Activated naive CD4-positive, alpha-beta T cell treated with anti-CD3 and anti-CD28 coated beads, Interleukin-2, amount 10 ng/mL, durations not matched to agents 7 days and 5 days (primary cell): ENCODE measurements at regions of chr12 and their contacts with region 1.

Region 1: GRCh38 chr12:1634590-1635191 is 5.7 kb downstream of the WNT5B start:
- DNase-seq: peak; percentile 75
- H3K4me3 Mint-ChIP-seq: no peak overlapping the region
- H3K27ac Mint-ChIP-seq: no peak overlapping the region
- H3K4me1 Mint-ChIP-seq: peaks cover 14% of the 10 kb centered on the region
- H3K27me3 Mint-ChIP-seq: peaks cover 75% of the 10 kb centered on the region

Region 2: GRCh38 chr12:1644534-1645438 is 10.1 kb after region 1 on chr12:
- CTCF ChIA-PET with region 1: interaction called, 32 read pairs
- DNase-seq: no peak
- H3K4me3 Mint-ChIP-seq: no peak overlapping the region
- H3K27ac Mint-ChIP-seq: no peak overlapping the region
- H3K4me1 Mint-ChIP-seq: peaks cover 9% of the 10 kb centered on the region
- H3K27me3 Mint-ChIP-seq: peaks cover 53% of the 10 kb centered on the region

Region 3: DNA sequence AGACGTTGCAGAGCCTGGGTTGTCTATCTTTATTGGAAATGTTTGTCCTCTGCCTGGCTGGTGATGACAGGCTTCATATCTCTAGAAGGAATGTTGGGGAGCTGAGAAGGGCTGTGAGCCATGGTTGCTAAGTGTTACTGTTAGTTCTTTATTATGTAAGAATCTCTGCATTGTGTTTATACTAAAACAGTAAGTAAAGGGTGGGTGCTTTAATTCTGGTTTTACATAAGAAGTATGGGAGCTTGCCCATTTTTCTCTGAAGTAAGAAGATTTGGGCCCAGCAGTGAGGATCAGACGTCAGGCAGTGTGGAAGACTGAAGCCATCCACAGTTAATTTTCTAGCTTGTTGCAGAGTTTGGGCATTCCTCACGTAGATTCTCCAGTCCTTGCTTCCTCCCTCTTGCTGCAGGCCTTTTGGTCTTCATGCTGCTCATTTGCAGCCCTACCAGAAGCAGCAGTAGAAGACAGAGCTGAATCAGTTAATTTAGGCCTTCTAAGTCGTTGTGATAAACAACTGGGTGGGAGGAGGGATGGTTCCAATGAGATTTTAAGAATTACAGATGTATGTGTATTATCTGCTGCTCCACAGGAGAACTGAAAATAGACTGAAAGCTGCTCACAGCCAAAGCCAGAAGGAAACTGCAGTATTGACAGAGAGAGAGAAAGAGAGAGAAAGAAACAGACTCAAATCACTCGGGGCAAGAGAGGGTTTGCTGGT is 15.7 kb after region 1 on chr12:
- CTCF ChIA-PET with region 1: interaction called, 32 read pairs
- DNase-seq: no peak
- H3K4me3 Mint-ChIP-seq: no peak overlapping the region
- H3K27ac Mint-ChIP-seq: no peak overlapping the region
- H3K4me1 Mint-ChIP-seq: peaks cover 6% of the 10 kb centered on the region
- H3K27me3 Mint-ChIP-seq: peaks cover 71% of the 10 kb centered on the region

Region 4: GRCh38 chr12:1795785-1796514 is 161.3 kb after region 1 on chr12:
- CTCF ChIA-PET with region 1: interaction called, 40 read pairs
- DNase-seq: peak; percentile 95
- H3K4me3 Mint-ChIP-seq: peak overlapping the region; percentile 88
- H3K27ac Mint-ChIP-seq: peak overlapping the region; percentile 91
- H3K4me1 Mint-ChIP-seq: peaks cover 21% of the 10 kb centered on the region
- H3K27me3 Mint-ChIP-seq: peaks cover 15% of the 10 kb centered on the region

Region 5: GRCh38 chr12:1939801-1940607 is 305.3 kb after region 1 on chr12:
- CTCF ChIA-PET with region 1: interaction called, 27 read pairs
- DNase-seq: peak; percentile 92
- H3K4me3 Mint-ChIP-seq: no peak overlapping the region
- H3K27ac Mint-ChIP-seq: no peak overlapping the region
- H3K4me1 Mint-ChIP-seq: peaks cover 4% of the 10 kb centered on the region
- H3K27me3 Mint-ChIP-seq: no peaks in the 10 kb centered on the region